Calu3 (cell line): ENCODE measurements at regions of chr2 and their contacts with region 1.

Region 1: GRCh38 chr2:11863513-11864328 is 117.3 kb downstream of the LPIN1 start:
- DNase-seq: peak; percentile 86
- H3K4me3 Mint-ChIP-seq: peak overlapping the region; percentile 30
- H3K27ac Mint-ChIP-seq: no peak overlapping the region
- H3K4me1 Mint-ChIP-seq: peaks cover 14% of the 10 kb centered on the region
- H3K27me3 Mint-ChIP-seq: no peaks in the 10 kb centered on the region
- CTCF ChIP-seq: peak; percentile 96

Region 2: DNA sequence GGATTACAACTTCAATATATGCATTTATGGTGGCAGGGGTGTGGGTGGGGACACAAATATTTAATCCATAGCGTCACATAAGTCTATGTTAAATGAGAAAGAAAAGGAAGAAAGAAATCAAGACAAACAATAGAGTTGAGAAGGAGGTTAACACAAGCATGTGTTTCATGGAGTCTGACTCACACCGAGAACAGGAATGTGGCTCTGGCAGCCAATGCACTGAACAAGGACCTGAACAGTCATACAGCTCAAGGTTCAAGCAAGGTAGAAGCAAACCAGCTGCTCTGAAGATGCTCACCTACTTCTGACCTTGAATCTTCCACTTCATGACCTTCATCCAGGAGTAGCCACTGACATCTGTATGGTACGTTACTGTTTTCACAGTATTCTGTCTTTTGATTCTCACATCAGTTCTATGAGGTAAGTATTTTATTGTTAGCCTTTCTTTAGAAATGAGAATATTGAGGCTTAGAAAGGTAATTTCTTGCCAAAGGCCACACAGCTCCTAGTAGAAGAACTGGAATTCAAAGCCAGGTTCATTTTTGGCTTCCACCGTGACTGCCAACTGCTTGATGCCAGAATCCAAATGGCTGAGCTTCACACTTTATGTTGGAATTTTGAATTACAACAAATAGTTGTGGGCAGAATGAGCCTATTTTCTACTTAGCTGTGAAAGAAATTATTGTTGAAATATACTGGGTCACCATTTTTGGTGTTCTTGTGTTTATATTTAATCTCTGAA is 153.3 kb before region 1 on chr2:
- CTCF ChIA-PET with region 1: no interaction called
- intact Hi-C with region 1: no loop called
- DNase-seq: peak; percentile 58
- H3K4me3 Mint-ChIP-seq: no peak overlapping the region
- H3K27ac Mint-ChIP-seq: peak overlapping the region; percentile 15
- H3K4me1 Mint-ChIP-seq: peaks cover 45% of the 10 kb centered on the region
- H3K27me3 Mint-ChIP-seq: no peaks in the 10 kb centered on the region
- CTCF ChIP-seq: no peak

Region 3: GRCh38 chr2:12032398-12032797 is 168.7 kb after region 1 on chr2:
- CTCF ChIA-PET with region 1: no interaction called
- intact Hi-C with region 1: loop called (anchors 10 kb)
- DNase-seq: no peak
- H3K4me3 Mint-ChIP-seq: no peak overlapping the region
- H3K27ac Mint-ChIP-seq: no peak overlapping the region
- H3K4me1 Mint-ChIP-seq: peaks cover 9% of the 10 kb centered on the region
- H3K27me3 Mint-ChIP-seq: peaks cover 11% of the 10 kb centered on the region
- CTCF ChIP-seq: no peak

Region 4: DNA sequence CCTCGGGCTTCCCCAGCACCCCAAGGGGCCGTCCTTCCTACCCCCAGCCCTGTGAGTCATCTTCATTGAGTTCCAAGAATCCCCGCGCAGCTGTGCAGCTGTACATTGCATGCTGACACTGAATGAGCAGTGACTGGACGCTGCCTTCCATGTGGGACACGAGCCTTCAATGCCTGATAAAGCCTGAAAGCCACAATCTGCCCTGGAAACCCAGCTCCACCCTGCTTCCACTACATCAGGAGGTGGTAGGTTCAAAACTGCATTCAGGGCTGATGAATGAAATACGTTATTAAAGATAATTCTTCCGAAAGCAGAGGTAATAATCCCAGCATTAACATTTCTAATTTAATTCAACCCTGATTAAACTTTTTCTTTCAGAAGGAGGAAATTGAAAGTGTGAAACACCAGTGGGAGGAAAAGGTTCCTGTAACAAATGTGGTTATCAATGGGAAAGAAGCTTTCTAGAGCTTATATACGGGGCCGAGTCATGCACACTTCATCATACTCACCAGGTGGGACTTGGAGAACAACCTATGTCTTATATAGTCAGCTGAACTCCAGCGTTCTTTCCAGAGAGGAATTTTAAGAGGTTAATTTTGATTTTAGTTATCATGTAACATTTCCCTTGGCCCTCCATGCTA is 242.8 kb after region 1 on chr2:
- CTCF ChIA-PET with region 1: no interaction called
- intact Hi-C with region 1: loop called (anchors 5 kb)
- DNase-seq: peak; percentile 64
- H3K4me3 Mint-ChIP-seq: no peak overlapping the region
- H3K27ac Mint-ChIP-seq: no peak overlapping the region
- H3K4me1 Mint-ChIP-seq: peaks cover 21% of the 10 kb centered on the region
- H3K27me3 Mint-ChIP-seq: peaks cover 14% of the 10 kb centered on the region
- CTCF ChIP-seq: no peak

Region 5: DNA sequence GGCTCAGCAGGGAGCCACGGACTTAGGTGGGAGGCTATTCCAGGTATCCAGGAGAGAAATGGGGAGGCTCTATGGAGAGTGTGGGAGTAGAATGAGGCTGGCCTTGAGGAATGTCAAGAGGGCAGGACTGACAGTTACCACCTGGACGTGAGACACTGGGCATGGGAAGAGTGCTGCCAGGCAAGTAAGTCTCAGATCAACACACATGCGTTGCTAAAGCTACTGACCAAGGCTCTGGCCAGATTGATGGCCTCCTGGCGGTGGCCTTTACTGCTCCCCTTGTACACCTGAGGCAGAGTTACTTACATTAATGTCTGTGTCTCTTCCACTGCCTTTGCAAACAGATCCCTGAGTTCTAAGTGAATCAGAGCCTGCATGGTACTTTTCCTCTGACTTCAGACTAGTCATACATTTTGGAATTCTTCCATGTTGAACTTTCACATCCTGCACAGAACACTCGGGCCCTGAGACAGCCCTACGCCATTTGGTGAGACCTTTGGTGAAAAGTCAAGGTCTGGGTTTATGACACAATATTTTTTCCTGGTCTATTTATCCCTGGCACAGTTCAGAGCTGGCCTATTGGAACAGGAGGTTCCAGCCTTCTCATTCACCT is 454.2 kb after region 1 on chr2:
- CTCF ChIA-PET with region 1: no interaction called
- intact Hi-C with region 1: loop called (anchors 10 kb)
- DNase-seq: no peak
- H3K4me3 Mint-ChIP-seq: no peak overlapping the region
- H3K27ac Mint-ChIP-seq: no peak overlapping the region
- H3K4me1 Mint-ChIP-seq: no peaks in the 10 kb centered on the region
- H3K27me3 Mint-ChIP-seq: no peaks in the 10 kb centered on the region
- CTCF ChIP-seq: no peak

Region 6: DNA sequence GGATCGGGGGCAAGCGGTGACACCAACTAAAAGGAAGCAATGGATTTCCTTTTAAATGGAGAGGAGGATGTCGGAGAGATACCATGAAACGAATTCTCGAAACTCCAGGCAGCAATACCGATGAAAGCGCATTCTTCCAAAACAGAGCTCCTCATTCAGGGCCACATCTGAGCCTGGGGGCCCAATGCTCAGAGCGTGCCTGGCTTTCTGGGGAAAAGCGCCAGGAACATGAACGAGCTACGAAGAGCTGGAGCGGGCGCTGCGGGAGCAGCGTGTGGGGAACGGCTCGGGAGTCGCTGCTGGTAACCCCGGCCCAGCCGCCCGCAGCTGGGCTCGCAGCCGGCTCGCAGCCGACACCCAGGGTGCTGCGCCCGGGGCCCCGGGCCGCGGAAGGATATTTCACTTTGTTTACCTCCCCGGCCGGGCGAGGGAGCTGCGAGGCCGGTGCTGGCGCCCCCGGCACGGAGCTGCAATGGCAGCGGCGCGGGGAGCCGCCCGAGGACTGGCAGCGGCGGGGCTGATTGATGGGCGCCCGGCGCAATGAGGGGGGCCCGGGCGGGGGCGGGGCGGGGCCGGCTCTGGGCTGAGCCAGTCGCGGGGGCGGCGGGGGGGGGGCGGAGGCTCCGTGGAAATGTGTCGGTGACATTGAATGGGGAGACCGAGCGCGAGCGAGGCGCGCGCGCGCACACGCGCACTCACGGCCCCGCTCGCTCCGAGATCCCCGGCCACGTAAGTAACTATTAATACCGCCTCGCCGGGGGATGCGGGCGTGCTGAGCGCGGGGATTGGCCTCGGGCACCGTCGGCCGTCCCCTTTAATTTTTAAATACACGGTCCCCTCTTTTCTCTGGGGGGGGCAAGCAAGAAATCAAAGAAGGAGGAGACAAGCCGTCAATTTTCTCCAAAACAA is 852.8 kb after region 1 on chr2 and contains the start of gene TRIB2:
- CTCF ChIA-PET with region 1: interaction called, 14 read pairs
- intact Hi-C with region 1: no loop called
- DNase-seq: peak; percentile 82
- H3K4me3 Mint-ChIP-seq: peak within 1 kb of the TSS; percentile 73
- H3K27ac Mint-ChIP-seq: peak within 1 kb of the TSS; percentile 97
- H3K4me1 Mint-ChIP-seq: peaks cover 29% of the 10 kb centered on the region
- H3K27me3 Mint-ChIP-seq: peaks cover 18% of the 10 kb centered on the region
- CTCF ChIP-seq: no peak
- total RNA-seq, gene TRIB2: 6.2 and 6.4 TPM in 2 replicates